Dendritic cell treated with granulocyte-macrophage colony-stimulating factor and Interleukin-4, amounts not matched to agents 40 ng/mL and 50 ng/mL, for 4 days (primary cell): ENCODE measurements at regions of chr13 and their contacts with region 1.

Region 1: GRCh38 chr13:113742000-113742441 is 17.0 kb upstream of the TMEM255B start:
- H3K4me3 Mint-ChIP-seq: no peak overlapping the region
- H3K27ac Mint-ChIP-seq: peak overlapping the region; percentile 6
- H3K4me1 Mint-ChIP-seq: peaks cover 47% of the 10 kb centered on the region
- H3K27me3 Mint-ChIP-seq: peaks cover 72% of the 10 kb centered on the region

Region 2: GRCh38 chr13:113758651-113759524 is 16.9 kb after region 1 on chr13 and contains the start of gene TMEM255B:
- intact Hi-C with region 1: loop called (anchors 2 kb)
- H3K4me3 Mint-ChIP-seq: peak within 1 kb of the TSS; percentile 86
- H3K27ac Mint-ChIP-seq: peak within 1 kb of the TSS; percentile 82
- H3K4me1 Mint-ChIP-seq: peaks cover 41% of the 10 kb centered on the region
- H3K27me3 Mint-ChIP-seq: peaks cover 50% of the 10 kb centered on the region